ENCODE measurements at regions of chr20 and their contacts with region 1.

Region 1: GRCh38 chr20:64119681-64120341 is 12.4 kb upstream of the NPBWR2 start:
- DNase-seq: no peak
- ATAC-seq: peak; percentile 15
- H3K4me3 Mint-ChIP-seq: no peak overlapping the region
- H3K27ac Mint-ChIP-seq: peak overlapping the region; percentile 76; the same call in 1 of the 2 replicates
- H3K4me1 Mint-ChIP-seq: peaks cover 5% of the 10 kb centered on the region
- H3K27me3 Mint-ChIP-seq: peaks cover 15% of the 10 kb centered on the region
- CTCF ChIP-seq: no peak

Region 2: GRCh38 chr20:63698739-63699465 is 420.9 kb before region 1 on chr20:
- CTCF ChIA-PET with region 1: no interaction called
- POLR2A ChIA-PET with region 1: no interaction called
- DNase-seq: no peak
- ATAC-seq: no peak
- H3K4me3 Mint-ChIP-seq: no peak overlapping the region
- H3K27ac Mint-ChIP-seq: no peak overlapping the region
- H3K4me1 Mint-ChIP-seq: peaks cover 7% of the 10 kb centered on the region
- H3K27me3 Mint-ChIP-seq: no peaks in the 10 kb centered on the region
- CTCF ChIP-seq: no peak

Region 3: GRCh38 chr20:64038565-64039292 is 81.1 kb before region 1 on chr20:
- CTCF ChIA-PET with region 1: interaction called, 48 read pairs
- POLR2A ChIA-PET with region 1: no interaction called
- DNase-seq: peak; percentile 89
- ATAC-seq: peak; percentile 68
- H3K4me3 Mint-ChIP-seq: peak overlapping the region; percentile 54
- H3K27ac Mint-ChIP-seq: no peak overlapping the region
- H3K4me1 Mint-ChIP-seq: peaks cover 28% of the 10 kb centered on the region
- H3K27me3 Mint-ChIP-seq: peaks cover 43% of the 10 kb centered on the region
- CTCF ChIP-seq: peak; percentile 58

Region 4: DNA sequence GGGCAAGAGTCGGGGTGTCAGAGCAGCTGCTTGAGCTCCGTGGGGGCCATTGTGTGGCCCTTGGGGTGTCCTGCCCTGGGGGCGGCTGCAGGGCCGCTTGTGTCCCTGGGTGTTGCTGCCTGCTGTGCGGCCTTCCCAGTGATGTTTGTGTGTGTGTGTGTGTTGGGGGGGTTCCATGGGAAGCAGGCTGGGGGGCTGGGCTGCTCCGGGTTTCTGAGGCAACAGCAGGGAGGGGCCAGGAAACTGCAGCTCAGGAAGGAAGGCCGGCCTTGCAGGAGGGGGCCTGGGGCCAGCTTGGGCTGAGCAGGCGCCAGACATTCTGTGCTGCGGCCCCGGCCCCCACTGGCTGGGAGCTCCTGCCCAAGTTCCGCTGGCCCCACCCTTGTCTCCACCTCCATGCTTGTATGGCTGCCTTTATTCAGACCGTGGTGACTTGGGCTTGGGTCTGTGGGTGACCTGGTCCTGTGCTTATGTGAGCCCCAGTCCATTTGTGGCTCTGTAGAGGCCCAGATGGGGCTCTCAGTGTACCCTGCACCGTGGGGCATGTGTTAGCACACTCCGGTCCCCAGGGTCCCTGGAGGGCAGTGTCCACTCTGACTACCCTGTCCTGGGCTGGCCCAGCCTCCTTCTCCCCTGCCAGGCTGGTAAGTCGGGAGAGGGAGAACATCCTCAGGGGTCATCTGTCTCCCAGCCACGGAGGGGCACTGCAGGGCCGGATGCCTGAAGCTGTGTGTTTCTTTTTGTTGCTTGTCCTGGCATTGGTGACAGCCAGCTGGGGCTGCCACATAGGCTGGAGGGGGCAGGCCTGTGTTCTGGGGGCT is 65.8 kb before region 1 on chr20:
- CTCF ChIA-PET with region 1: interaction called, 21 read pairs
- POLR2A ChIA-PET with region 1: no interaction called
- DNase-seq: peak; percentile 56
- ATAC-seq: peak; percentile 20
- H3K4me3 Mint-ChIP-seq: no peak overlapping the region
- H3K27ac Mint-ChIP-seq: peak overlapping the region; percentile 74; the same call in 1 of the 2 replicates
- H3K4me1 Mint-ChIP-seq: peaks cover 22% of the 10 kb centered on the region
- H3K27me3 Mint-ChIP-seq: peaks cover 24% of the 10 kb centered on the region
- CTCF ChIP-seq: no peak

Region 5: GRCh38 chr20:64079273-64080012 is 40.4 kb before region 1 on chr20 and contains the start of gene RGS19:
- CTCF ChIA-PET with region 1: interaction called, 119 read pairs
- POLR2A ChIA-PET with region 1: interaction called, 3 read pairs
- DNase-seq: peak; percentile 75
- ATAC-seq: peak; percentile 40
- H3K4me3 Mint-ChIP-seq: peak within 1 kb of the TSS; percentile 80
- H3K27ac Mint-ChIP-seq: no peak within 1 kb of the TSS
- H3K4me1 Mint-ChIP-seq: peaks cover 29% of the 10 kb centered on the region
- H3K27me3 Mint-ChIP-seq: peaks cover 35% of the 10 kb centered on the region
- CTCF ChIP-seq: no peak
- total RNA-seq, gene RGS19: 13.8 to 15.9 TPM (median 15.1 TPM) in 3 replicates

Region 6: DNA sequence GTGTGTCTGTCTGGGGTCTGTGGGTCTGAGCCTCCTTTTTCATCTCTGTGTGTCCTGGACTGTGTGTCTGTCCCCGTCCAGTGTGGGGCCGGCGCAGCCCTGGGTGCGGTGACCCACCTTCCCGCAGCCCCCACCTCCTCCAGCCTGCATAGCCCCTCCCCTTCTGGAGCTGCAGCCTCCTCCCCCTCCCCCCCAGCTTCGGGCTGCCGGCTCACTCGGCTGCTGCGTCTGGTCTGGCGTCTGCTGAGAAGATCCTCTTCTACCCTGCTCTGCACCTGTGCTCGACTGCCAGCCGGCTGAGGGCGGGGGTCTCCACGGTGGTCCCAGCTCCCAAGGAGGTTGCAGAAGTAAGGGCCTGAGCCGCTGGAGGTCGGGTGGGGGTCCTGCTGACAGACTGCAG is 28.0 kb before region 1 on chr20:
- CTCF ChIA-PET with region 1: interaction called, 11 read pairs
- POLR2A ChIA-PET with region 1: no interaction called
- DNase-seq: no peak
- ATAC-seq: peak; percentile 78
- H3K4me3 Mint-ChIP-seq: no peak overlapping the region
- H3K27ac Mint-ChIP-seq: no peak overlapping the region
- H3K4me1 Mint-ChIP-seq: peaks cover 7% of the 10 kb centered on the region
- H3K27me3 Mint-ChIP-seq: peaks cover 11% of the 10 kb centered on the region; the same call in 1 of the 2 replicates
- CTCF ChIP-seq: no peak

Region 7: DNA sequence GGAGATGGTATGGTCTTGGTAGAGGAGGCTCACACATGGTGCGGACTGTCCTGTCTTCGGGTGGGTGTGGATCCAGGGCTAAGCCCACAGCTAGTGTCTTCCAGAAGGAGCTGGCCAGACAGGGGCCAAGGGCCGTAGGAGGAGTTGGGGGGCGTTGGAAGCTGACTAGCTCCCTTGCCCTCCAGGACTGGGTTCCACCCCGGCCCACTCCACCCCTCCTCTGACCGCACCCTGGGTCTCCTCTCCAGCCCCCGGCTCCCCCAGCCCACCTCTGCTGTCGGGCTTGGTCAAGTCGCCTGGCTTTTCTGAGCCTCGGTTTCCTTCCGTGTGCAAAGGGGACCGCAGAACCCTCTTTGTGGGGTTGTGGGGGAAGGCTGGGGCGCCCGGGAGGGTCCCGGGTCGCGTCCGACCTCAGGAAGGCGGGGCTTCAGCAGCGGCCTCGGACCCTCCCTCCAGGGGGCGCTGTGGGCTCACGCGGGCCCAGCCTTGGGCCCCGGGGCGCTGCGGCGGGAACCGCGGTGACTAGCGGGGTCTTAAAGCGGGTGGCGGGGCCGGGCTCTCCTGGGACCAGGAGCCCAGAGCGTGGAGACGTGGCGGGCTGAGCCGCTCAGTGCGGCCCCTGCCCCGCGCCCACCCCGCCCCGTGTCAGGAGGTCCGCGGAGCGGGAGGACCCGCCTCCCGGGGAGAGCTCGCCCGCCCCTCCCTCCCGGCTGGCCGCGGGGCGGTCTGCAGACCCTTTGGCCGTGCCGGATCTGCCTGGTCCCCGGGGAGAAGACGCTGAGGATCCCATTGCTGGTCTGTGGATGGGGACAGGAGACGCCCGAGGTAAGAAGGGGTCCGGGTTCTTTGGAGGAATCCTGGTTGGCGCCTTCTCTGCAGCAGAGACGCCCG is 17.8 kb before region 1 on chr20:
- CTCF ChIA-PET with region 1: interaction called, 75 read pairs
- POLR2A ChIA-PET with region 1: no interaction called
- DNase-seq: peak; percentile 79
- ATAC-seq: peak; percentile 82
- H3K4me3 Mint-ChIP-seq: peak overlapping the region; percentile 74
- H3K27ac Mint-ChIP-seq: no peak overlapping the region
- H3K4me1 Mint-ChIP-seq: peaks cover 8% of the 10 kb centered on the region
- H3K27me3 Mint-ChIP-seq: peaks cover 22% of the 10 kb centered on the region
- CTCF ChIP-seq: peak; percentile 91

Region 8: GRCh38 chr20:64106981-64107735 is 12.7 kb before region 1 on chr20 and contains the start of gene NPBWR2:
- CTCF ChIA-PET with region 1: interaction called, 75 read pairs
- POLR2A ChIA-PET with region 1: no interaction called
- DNase-seq: peak; percentile 23
- ATAC-seq: peak; percentile 17; the same call in 1 of the 2 replicates
- H3K4me3 Mint-ChIP-seq: no peak within 1 kb of the TSS
- H3K27ac Mint-ChIP-seq: peak within 1 kb of the TSS; percentile 85
- H3K4me1 Mint-ChIP-seq: peaks cover 8% of the 10 kb centered on the region
- H3K27me3 Mint-ChIP-seq: peaks cover 16% of the 10 kb centered on the region
- CTCF ChIP-seq: no peak
- total RNA-seq, gene NPBWR2: not detected in 3 replicates